ENCODE measurements at regions of chr6 and their contacts with region 1.

Region 1: GRCh38 chr6:13487122-13488014 is at the start of gene GFOD1:
- DNase-seq: peak; percentile 91 to 95 (median 92)
- ATAC-seq: peak; percentile 81 to 91 (median 86)
- H3K4me3 ChIP-seq: peak within 1 kb of the TSS; percentile 68 to 97 (median 90)
- H3K27ac ChIP-seq: peak within 1 kb of the TSS; percentile 86 to 98 (median 95)
- H3K4me1 ChIP-seq: peaks cover 0 to 47% (median 31%) of the 10 kb centered on the region in 12 donors
- H3K27me3 ChIP-seq: no peaks in the 10 kb centered on the region
- CTCF ChIP-seq: peak in 4 of 12 donors; percentile 21 to 36 (median 28)
- POLR2A ChIP-seq: peak; percentile 88 to 97
- total RNA-seq, gene GFOD1: 25.0 to 65.8 (median 41.9) TPM

Region 2: GRCh38 chr6:13413900-13414555 is 73.3 kb before region 1 on chr6:
- intact Hi-C with region 1: loop called in 4 of 10 experiments (anchors 5 to 10 kb)
- DNase-seq: peak in 4 of 5 donors; percentile 57 to 86 (median 70)
- ATAC-seq: peak; percentile 75 to 84 (median 80)
- H3K4me3 ChIP-seq: no peak overlapping the region
- H3K27ac ChIP-seq: peak overlapping the region; percentile 61 to 93 (median 76)
- H3K4me1 ChIP-seq: peaks cover 7 to 96% (median 76%) of the 10 kb centered on the region in 12 donors
- H3K27me3 ChIP-seq: no peaks in the 10 kb centered on the region
- CTCF ChIP-seq: peak in 1 of 12 donors; percentile 33
- POLR2A ChIP-seq: no peak

Region 3: GRCh38 chr6:13427801-13428582 is 59.4 kb before region 1 on chr6:
- intact Hi-C with region 1: loop called in 2 of 10 experiments (anchors 5 to 10 kb)
- DNase-seq: no peak
- ATAC-seq: peak in 1 of 4 donors; percentile 6
- H3K4me3 ChIP-seq: peak overlapping the region in 1 of 12 donors; percentile 25
- H3K27ac ChIP-seq: peak overlapping the region in 10 of 12 donors; percentile 12 to 91 (median 44)
- H3K4me1 ChIP-seq: peaks cover 9 to 97% (median 71%) of the 10 kb centered on the region in 12 donors
- H3K27me3 ChIP-seq: no peaks in the 10 kb centered on the region
- CTCF ChIP-seq: no peak
- POLR2A ChIP-seq: no peak

Region 4: GRCh38 chr6:13538084-13538483 is 50.7 kb after region 1 on chr6:
- intact Hi-C with region 1: loop called in 6 of 10 experiments (anchors 2 to 5 kb)
- DNase-seq: no peak
- ATAC-seq: peak; percentile 55 to 78 (median 76)
- H3K4me3 ChIP-seq: no peak overlapping the region
- H3K27ac ChIP-seq: peak overlapping the region in 10 of 12 donors; percentile 8 to 73 (median 37)
- H3K4me1 ChIP-seq: peaks cover 0 to 24% (median 13%) of the 10 kb centered on the region in 12 donors
- H3K27me3 ChIP-seq: no peaks in the 10 kb centered on the region
- CTCF ChIP-seq: peak; percentile 38 to 73 (median 60)
- POLR2A ChIP-seq: no peak

Measured in heart left ventricle (tissue), 16 donors.